Endothelial cell of umbilical vein (primary cell): ENCODE measurements at regions of chr14 and their contacts with region 1.

Region 1: GRCh38 chr14:95561001-95561412 is 26.2 kb downstream of the GLRX5 start:
- DNase-seq: peak; percentile 86
- H3K4me3 ChIP-seq: no peak overlapping the region
- H3K27ac ChIP-seq: no peak overlapping the region
- H3K4me1 ChIP-seq: no peaks in the 10 kb centered on the region
- H3K27me3 ChIP-seq: no peaks in the 10 kb centered on the region
- CTCF ChIP-seq: peak; percentile 90 to 96
- POLR2A ChIP-seq: no peak

Region 2: DNA sequence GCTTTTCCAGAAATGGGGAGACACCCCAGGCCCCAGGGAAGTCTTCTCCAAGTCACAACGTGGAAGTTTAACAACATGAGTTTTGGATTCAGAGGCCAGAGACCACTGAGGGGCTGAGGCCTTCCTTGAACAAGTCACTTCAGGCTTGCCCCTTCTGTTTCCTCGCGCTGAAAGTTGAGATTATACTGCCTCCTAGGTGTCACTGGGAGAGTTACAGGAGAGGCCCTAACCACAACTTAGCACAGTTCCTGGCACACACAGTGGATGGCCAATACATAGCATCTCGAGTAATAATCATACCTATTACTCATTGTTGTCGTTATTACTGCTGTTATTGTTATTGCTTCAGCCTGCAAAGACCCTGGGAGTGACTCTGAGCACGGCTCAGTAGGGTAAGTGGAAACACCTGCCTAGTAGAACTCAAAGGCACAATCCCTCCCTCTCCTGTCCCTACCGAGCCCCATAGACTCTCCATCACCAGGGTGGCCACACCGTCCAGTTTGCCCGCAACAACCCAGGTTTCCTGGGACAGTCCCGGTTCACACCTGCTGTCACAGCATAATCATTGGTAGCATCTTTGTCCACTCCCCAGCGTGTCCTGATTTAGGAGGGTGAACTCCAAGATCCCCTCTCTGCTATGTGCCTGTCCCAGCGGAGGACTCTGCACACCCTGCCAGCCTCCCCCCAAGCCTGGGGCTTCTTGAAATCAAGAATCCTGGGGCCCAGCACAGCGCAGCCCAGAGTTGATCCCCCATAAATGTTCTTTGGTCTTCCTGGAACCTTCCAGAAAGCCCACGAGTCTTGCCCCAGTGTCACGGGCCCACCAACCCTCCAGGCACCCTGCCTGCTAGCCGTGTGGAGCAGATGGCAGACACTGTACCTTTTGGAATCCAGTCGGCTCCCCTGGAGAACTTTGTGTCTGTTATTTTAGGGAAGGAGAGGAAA is 129.5 kb before region 1 on chr14:
- CTCF ChIA-PET with region 1: interaction called, 17 read pairs
- POLR2A ChIA-PET with region 1: no interaction called
- dilution Hi-C with region 1: no loop called
- intact Hi-C with region 1: no loop called
- DNase-seq: peak; percentile 27
- H3K4me3 ChIP-seq: no peak overlapping the region
- H3K27ac ChIP-seq: no peak overlapping the region
- H3K4me1 ChIP-seq: no peaks in the 10 kb centered on the region
- H3K27me3 ChIP-seq: no peaks in the 10 kb centered on the region
- CTCF ChIP-seq: peak; percentile 40 to 50
- POLR2A ChIP-seq: no peak

Region 3: GRCh38 chr14:95507701-95508103 is 53.3 kb before region 1 on chr14:
- CTCF ChIA-PET with region 1: no interaction called
- POLR2A ChIA-PET with region 1: no interaction called
- dilution Hi-C with region 1: no loop called
- intact Hi-C with region 1: no loop called
- DNase-seq: peak; percentile 83
- H3K4me3 ChIP-seq: no peak overlapping the region
- H3K27ac ChIP-seq: peak overlapping the region; percentile 88
- H3K4me1 ChIP-seq: peaks cover 28% of the 10 kb centered on the region
- H3K27me3 ChIP-seq: no peaks in the 10 kb centered on the region
- CTCF ChIP-seq: no peak
- POLR2A ChIP-seq: no peak

Region 4: DNA sequence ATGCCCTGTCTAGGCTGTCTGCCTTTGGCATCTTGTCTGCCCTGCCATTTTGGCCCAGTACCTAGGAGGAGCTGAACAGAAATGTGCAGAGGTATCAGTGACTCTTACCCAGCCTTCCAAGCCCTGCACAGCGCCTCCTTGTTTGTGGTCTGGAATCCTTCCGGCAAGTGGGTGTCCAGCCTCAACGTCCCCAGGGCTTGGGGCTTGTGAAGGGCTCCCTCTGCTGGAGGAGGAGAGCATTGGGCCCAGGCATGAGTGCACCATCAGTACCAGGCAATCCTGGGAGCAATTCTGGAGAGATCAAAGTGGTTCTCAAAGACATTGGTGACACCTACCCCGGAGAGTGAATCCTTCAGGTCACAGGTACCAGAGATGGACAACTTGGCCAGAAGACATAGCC is 122.8 kb after region 1 on chr14:
- CTCF ChIA-PET with region 1: no interaction called
- POLR2A ChIA-PET with region 1: no interaction called
- dilution Hi-C with region 1: no loop called
- intact Hi-C with region 1: loop called (anchors 1 kb)
- DNase-seq: no peak
- H3K4me3 ChIP-seq: no peak overlapping the region
- H3K27ac ChIP-seq: no peak overlapping the region
- H3K4me1 ChIP-seq: no peaks in the 10 kb centered on the region
- H3K27me3 ChIP-seq: no peaks in the 10 kb centered on the region
- CTCF ChIP-seq: peak; percentile 37 to 42
- POLR2A ChIP-seq: no peak

Region 5: GRCh38 chr14:95993768-95994592 is 433.0 kb after region 1 on chr14:
- CTCF ChIA-PET with region 1: interaction called, 104 read pairs
- POLR2A ChIA-PET with region 1: no interaction called
- dilution Hi-C with region 1: no loop called
- intact Hi-C with region 1: loop called (anchors 1 kb)
- DNase-seq: peak; percentile 40
- H3K4me3 ChIP-seq: no peak overlapping the region
- H3K27ac ChIP-seq: no peak overlapping the region
- H3K4me1 ChIP-seq: no peaks in the 10 kb centered on the region
- H3K27me3 ChIP-seq: no peaks in the 10 kb centered on the region
- CTCF ChIP-seq: peak; percentile 62 to 67
- POLR2A ChIP-seq: no peak

Region 6: GRCh38 chr14:96275177-96276112 is 714.4 kb after region 1 on chr14:
- CTCF ChIA-PET with region 1: interaction called, 30 read pairs
- POLR2A ChIA-PET with region 1: no interaction called
- dilution Hi-C with region 1: no loop called
- intact Hi-C with region 1: loop called (anchors 1 kb)
- DNase-seq: peak; percentile 51
- H3K4me3 ChIP-seq: no peak overlapping the region
- H3K27ac ChIP-seq: no peak overlapping the region
- H3K4me1 ChIP-seq: no peaks in the 10 kb centered on the region
- H3K27me3 ChIP-seq: no peaks in the 10 kb centered on the region
- CTCF ChIP-seq: peak; percentile 89 to 98
- POLR2A ChIP-seq: no peak